ENCODE measurements at regions of chr2 and their contacts with region 1.

Region 1: DNA sequence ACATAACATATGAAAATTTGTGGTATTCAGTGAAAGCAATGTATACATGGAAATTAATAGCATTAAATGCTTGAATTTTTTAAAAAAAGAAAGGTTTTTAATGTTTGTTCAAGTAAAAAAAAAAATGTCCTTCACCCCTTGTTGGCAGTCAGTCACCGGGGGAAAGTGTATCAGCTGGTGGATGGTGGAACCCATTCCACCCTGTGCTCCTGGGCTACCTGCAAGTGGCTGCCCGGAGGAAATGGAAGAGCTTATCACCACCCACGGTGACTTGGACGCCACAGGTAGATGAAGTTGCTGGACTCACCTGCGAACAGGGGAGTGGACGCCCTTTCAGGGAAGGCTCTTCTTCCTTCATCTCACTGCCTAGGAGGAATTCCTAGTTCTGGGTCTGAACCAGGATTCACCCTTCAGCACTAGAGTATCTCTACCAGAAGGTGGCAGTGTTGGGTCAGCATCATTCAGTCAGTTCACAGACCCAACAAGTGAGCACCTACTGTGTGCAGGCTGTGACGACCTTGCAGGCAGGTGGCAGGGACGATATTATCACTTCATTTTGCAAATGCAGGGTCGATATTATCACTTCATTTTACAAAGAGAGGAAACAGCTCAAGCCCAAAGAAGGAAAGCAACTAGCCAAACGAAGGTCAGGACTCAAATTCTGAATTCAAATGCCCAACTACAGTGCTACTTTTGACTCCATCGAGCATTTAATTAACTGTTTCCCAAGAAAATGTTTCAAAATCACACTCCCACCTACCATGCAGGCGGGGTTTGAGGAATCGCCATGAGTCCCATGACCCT is 35.8 kb downstream of the CIB4 start:
- DNase-seq: no peak
- H3K4me3 ChIP-seq: no peak overlapping the region
- H3K27ac ChIP-seq: no peak overlapping the region
- H3K4me1 ChIP-seq: no peaks in the 10 kb centered on the region
- H3K27me3 ChIP-seq: no peaks in the 10 kb centered on the region
- CTCF ChIP-seq: peak; percentile 72 to 85 (median 77)

Region 2: DNA sequence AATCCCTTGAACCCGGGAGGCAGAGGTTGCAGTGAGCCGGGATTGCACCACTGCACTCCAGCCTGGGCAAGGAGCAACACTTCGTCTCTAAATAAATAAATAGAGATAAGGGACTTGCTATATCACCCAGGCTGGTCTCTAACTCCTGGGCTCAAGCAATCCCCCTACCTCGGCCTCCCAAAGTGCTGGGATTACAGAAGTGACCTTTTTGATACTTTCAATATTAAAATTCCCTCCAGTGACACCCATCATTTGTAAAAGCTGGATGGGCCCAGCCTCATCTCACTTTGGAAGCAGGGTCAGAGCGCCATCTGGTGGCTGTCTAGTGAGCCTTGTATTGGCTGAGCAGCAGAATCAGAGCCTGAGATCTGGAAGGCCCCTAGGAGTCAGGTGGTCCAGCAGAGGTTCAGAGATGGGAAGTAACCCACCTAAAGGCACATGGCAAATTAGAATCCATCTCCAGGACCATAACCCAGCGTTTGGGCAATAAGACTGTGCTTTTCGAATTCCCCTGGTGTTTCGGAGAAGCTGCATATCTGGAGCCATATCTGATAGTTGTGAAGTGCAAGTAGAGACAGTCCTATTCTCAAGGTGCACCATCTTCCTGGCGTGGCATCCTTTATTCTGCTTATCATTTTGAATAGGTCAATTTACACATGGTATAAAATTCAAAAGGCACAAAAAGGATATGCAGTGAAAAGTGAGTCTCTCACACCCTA is 140.4 kb after region 1 on chr2:
- intact Hi-C with region 1: loop called (anchors 1 kb)
- DNase-seq: peak in 1 of 2 donors; percentile 89
- H3K4me3 ChIP-seq: no peak overlapping the region
- H3K27ac ChIP-seq: no peak overlapping the region
- H3K4me1 ChIP-seq: peaks cover 0 to 3% of the 10 kb centered on the region in 2 donors
- H3K27me3 ChIP-seq: no peaks in the 10 kb centered on the region
- CTCF ChIP-seq: peak; percentile 86 to 94 (median 91)